Activated T-helper 2 cell treated with anti-CD3 and anti-CD28 coated beads, Interferon-gamma antibody, Interleukin-2, Interleukin-4, amounts not matched to agents 10 μg/mL and 5 μg/mL and 100 μg/mL, durations not matched to agents 14 hours and 24 hours and 36 hours (primary cell): ENCODE measurements at regions of chr5 and their contacts with region 1.

Region 1: DNA sequence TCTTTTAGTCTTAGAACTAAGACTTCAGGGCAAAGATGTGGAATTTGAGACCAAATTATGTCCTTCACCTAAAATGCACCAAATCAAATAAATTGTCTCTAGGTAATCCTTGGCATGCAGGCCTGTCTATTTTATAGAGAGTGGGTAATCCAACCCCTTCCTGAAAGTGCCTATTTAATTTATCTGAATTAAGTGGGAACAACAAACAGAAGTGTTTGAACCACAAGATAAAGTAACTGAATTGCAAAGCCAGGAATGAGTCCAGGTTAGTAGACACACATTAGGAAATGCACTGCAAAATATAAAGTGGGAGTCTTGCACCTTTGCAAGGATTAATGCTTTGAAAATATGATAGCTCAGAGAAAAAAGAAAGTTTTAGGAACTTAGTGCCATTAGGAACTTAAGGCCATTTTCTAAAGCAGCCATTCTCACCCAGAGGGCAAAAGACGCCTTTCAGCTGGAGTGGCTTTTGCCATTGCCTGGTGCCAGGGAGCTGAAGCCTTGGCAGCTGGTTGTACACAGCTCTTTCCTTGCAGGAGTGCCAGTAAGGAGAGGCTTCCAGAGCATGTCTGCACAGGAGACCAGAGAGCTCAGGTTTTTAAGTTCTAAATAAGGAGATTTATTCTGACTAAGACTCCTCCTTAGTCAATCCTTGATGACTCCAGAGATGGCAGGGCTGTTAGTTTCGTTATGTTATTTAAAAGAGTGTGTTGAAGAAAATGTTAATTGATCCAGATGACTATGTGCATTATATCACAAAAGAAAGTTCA is 151.7 kb upstream of the ELL2 start:
- DNase-seq: no peak
- H3K4me3 Mint-ChIP-seq: no peak overlapping the region
- H3K27ac Mint-ChIP-seq: peak overlapping the region; percentile 47
- H3K4me1 Mint-ChIP-seq: peaks cover 50% of the 10 kb centered on the region
- H3K27me3 Mint-ChIP-seq: no peaks in the 10 kb centered on the region

Region 2: GRCh38 chr5:95718203-95718602 is 395.2 kb before region 1 on chr5:
- intact Hi-C with region 1: loop called (anchors 5 kb)
- DNase-seq: peak; percentile 21
- H3K4me3 Mint-ChIP-seq: no peak overlapping the region
- H3K27ac Mint-ChIP-seq: no peak overlapping the region
- H3K4me1 Mint-ChIP-seq: peaks cover 19% of the 10 kb centered on the region
- H3K27me3 Mint-ChIP-seq: peaks cover 31% of the 10 kb centered on the region

Region 3: GRCh38 chr5:95870105-95870672 is 243.2 kb before region 1 on chr5:
- intact Hi-C with region 1: loop called (anchors 2 kb)
- DNase-seq: peak; percentile 28
- H3K4me3 Mint-ChIP-seq: peak overlapping the region; percentile 37
- H3K27ac Mint-ChIP-seq: peak overlapping the region; percentile 89
- H3K4me1 Mint-ChIP-seq: peaks cover 45% of the 10 kb centered on the region
- H3K27me3 Mint-ChIP-seq: peaks cover 4% of the 10 kb centered on the region

Region 4: DNA sequence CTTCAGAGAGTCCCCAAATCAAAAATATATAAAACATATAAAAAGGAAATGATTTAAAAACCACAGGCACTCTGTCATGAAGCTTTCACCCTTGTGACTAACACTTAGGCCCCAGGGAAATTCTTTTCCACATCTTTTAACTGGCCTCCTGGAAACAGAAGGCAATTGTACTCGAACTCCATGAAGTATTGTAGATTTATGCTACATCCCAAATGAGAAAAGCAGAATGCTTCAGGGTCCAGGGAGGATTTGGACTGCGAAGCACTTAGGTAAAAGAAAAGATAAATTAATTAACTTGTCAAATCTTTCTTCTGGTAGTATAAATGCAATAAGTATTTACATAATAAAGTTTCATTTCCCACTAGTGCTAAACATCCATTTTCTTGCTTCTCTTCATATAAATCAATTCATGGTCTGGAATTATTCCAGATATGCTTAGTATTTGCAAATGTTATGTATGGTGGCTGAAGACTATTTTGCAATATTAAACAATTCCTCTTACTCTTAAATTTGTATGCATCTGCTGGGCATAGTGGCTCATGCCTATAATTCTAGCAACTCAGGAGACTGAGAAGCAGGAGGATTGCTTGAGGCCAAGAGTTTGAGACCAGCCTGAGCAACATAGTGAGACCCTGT is 86.8 kb before region 1 on chr5:
- intact Hi-C with region 1: no loop called
- DNase-seq: no peak
- H3K4me3 Mint-ChIP-seq: no peak overlapping the region
- H3K27ac Mint-ChIP-seq: no peak overlapping the region
- H3K4me1 Mint-ChIP-seq: no peaks in the 10 kb centered on the region
- H3K27me3 Mint-ChIP-seq: no peaks in the 10 kb centered on the region

Region 5: GRCh38 chr5:96079075-96079474 is 34.3 kb before region 1 on chr5:
- intact Hi-C with region 1: loop called (anchors 1 kb)
- DNase-seq: no peak
- H3K4me3 Mint-ChIP-seq: no peak overlapping the region
- H3K27ac Mint-ChIP-seq: peak overlapping the region; percentile 76
- H3K4me1 Mint-ChIP-seq: peaks cover 64% of the 10 kb centered on the region
- H3K27me3 Mint-ChIP-seq: no peaks in the 10 kb centered on the region

Region 6: GRCh38 chr5:96220610-96221390 is 107.4 kb after region 1 on chr5:
- intact Hi-C with region 1: loop called (anchors 2 kb)
- DNase-seq: no peak
- H3K4me3 Mint-ChIP-seq: no peak overlapping the region
- H3K27ac Mint-ChIP-seq: peak overlapping the region; percentile 64
- H3K4me1 Mint-ChIP-seq: peaks cover 15% of the 10 kb centered on the region
- H3K27me3 Mint-ChIP-seq: no peaks in the 10 kb centered on the region

Region 7: DNA sequence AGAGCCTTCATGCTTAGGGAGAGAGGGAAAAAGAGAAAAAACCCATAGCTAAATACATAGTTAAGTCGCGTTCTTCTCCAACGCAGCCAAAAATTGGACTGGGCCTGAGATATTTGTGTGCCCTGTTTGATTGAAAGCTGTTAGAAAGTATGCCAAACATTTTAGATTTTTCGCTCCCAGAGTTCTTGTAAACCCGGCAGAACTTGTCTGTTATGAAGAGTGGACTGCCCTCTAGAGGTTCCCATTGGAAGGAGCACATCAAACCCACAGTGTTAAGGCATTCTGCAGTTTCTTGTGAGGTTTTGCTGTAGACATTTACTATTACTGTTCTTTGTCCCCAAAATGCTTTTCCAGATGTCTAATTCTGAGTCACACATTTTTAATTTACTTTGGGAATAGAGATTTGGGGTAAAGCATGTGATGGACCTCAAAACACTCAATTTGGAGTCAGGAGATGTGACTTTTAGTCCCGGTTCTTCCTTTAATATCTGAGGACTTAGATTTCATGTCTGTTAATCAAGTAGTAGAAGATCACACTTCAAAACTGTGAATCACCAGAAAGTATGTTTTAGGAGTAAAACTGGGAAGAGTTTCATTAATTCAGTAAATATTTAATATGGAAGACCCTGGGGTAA is 223.1 kb after region 1 on chr5:
- intact Hi-C with region 1: loop called (anchors 5 kb)
- DNase-seq: peak; percentile 38
- H3K4me3 Mint-ChIP-seq: no peak overlapping the region
- H3K27ac Mint-ChIP-seq: no peak overlapping the region
- H3K4me1 Mint-ChIP-seq: peaks cover 14% of the 10 kb centered on the region
- H3K27me3 Mint-ChIP-seq: peaks cover 21% of the 10 kb centered on the region